Activated CD4-positive, alpha-beta T cell treated with anti-CD3 and anti-CD28 coated beads for 36 hours (primary cell): ENCODE measurements at regions of chr12 and their contacts with region 1.

Region 1: DNA sequence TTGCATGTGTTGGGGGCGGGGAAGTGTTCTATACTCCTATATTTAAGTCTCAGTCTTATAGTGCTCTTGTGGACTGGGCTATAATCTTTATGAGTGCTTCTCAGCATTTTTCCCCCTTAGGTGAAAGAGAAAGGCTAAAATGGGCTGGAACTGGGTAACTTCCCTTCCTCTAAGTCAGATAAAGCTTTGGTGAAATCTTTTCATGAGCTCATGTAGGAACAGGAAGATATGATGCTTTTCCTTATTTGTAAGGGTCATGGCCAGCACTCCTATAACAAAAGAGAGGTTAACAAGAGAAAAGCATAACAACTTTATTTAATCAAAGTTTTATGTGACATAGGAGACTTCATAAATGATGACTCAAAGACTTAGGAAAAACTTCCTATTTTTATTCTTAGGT is 841.5 kb downstream of the SLC16A7 start:
- DNase-seq: no peak
- ATAC-seq: no peak
- H3K4me3 Mint-ChIP-seq: no peak overlapping the region
- H3K27ac Mint-ChIP-seq: no peak overlapping the region
- H3K4me1 Mint-ChIP-seq: no peaks in the 10 kb centered on the region
- H3K27me3 Mint-ChIP-seq: no peaks in the 10 kb centered on the region

Region 2: GRCh38 chr12:60137513-60137912 is 299.8 kb before region 1 on chr12:
- CTCF ChIA-PET with region 1: no interaction called
- POLR2A ChIA-PET with region 1: no interaction called
- intact Hi-C with region 1: no loop called
- DNase-seq: no peak
- ATAC-seq: no peak
- H3K4me3 Mint-ChIP-seq: no peak overlapping the region
- H3K27ac Mint-ChIP-seq: no peak overlapping the region
- H3K4me1 Mint-ChIP-seq: no peaks in the 10 kb centered on the region
- H3K27me3 Mint-ChIP-seq: no peaks in the 10 kb centered on the region

Region 3: DNA sequence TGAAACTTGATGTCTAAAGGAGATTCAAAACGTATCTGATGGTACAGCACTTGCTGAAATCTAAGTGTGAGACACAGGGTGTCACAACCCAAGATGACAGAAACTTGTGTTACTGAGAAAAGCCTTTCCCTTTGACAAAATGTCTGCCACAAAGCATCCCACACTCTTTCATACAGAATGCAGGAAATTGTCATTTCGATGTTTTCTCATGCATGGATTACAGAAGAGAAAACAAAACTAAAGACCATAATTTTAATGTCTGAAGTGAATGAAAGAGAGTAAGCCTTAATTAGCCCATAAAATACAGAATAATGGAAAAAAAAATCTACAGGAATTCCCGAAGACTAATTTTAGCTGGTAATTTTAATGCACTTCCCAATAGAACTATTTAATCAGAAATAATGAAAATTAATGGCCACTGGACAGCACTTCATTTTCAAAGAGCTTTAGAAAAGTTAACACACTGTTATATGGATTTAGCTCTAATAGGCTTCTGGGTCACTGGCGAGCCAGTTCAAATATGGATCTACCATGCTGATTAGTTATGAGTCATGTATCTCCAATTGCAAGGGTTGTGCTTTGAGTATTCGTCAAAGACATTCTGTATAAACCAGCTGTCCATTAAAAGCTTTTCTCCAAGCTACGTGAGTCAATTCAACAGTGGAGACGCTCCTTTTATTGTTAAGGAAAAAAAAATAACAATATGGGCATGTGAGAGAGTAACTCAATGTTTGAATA is 184.8 kb before region 1 on chr12:
- CTCF ChIA-PET with region 1: no interaction called
- POLR2A ChIA-PET with region 1: no interaction called
- intact Hi-C with region 1: no loop called
- DNase-seq: no peak
- ATAC-seq: no peak
- H3K4me3 Mint-ChIP-seq: no peak overlapping the region
- H3K27ac Mint-ChIP-seq: no peak overlapping the region
- H3K4me1 Mint-ChIP-seq: no peaks in the 10 kb centered on the region
- H3K27me3 Mint-ChIP-seq: no peaks in the 10 kb centered on the region

Region 4: GRCh38 chr12:60489071-60489470 is 51.8 kb after region 1 on chr12:
- CTCF ChIA-PET with region 1: no interaction called
- POLR2A ChIA-PET with region 1: no interaction called
- intact Hi-C with region 1: loop called in 1 of 2 experiments (anchors 5 kb)
- DNase-seq: no peak
- ATAC-seq: no peak
- H3K4me3 Mint-ChIP-seq: no peak overlapping the region
- H3K27ac Mint-ChIP-seq: no peak overlapping the region
- H3K4me1 Mint-ChIP-seq: no peaks in the 10 kb centered on the region
- H3K27me3 Mint-ChIP-seq: no peaks in the 10 kb centered on the region